ENCODE measurements at regions of chr12 and their contacts with region 1.

Region 1: GRCh38 chr12:120649442-120650232 is 9.2 kb downstream of the CABP1 start:
- DNase-seq: no peak
- H3K4me3 ChIP-seq: peak overlapping the region; percentile 40
- CTCF ChIP-seq: no peak

Region 2: GRCh38 chr12:120481022-120481767 is 168.4 kb before region 1 on chr12:
- CTCF ChIA-PET with region 1: no interaction called
- POLR2A ChIA-PET with region 1: no interaction called
- DNase-seq: no peak
- H3K4me3 ChIP-seq: no peak overlapping the region
- CTCF ChIP-seq: no peak

Region 3: GRCh38 chr12:120588948-120589930 is 60.4 kb before region 1 on chr12:
- CTCF ChIA-PET with region 1: interaction called, 101 read pairs
- POLR2A ChIA-PET with region 1: no interaction called
- DNase-seq: no peak
- H3K4me3 ChIP-seq: no peak overlapping the region
- CTCF ChIP-seq: no peak

Region 4: DNA sequence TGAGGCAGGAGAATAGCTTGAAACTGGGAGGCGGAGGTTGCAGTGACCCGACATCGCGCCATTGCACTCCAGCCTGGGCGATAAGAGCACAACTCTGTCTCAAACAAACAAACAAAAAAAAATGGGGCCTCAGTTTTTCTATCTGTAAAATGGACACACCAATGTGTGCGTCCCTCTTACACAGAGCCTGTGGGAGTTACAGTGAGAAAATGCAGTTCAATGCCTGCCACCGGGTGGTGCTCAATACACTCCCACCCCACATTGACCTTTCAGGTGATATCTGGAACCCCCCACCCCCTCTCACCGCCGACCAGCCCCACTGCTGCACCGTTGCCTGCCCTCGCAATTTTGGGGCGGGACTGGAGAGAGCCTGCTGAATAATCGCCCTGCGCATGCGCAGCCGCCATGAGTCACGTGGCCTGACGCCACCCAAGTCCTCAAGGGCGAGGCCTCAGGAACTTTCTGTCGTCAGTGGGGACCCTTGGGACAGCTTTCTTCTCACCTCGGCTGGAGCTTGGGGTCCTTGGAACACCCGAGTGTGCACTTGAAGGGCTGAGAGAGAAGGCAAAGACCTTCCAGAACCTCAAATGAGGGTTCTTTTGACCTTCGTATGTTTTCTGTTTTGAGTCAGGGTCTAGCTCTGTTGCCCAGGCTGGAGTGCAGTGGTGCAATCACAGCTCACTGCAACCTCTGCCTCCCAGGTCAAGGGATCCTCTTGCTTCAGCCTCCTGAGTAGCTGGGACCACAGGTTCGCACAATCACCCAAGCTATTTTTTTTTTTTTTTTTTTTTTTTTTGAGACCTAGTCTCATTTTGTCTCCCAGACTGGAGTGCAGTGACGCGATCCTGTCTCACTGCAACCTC is 23.8 kb before region 1 on chr12:
- CTCF ChIA-PET with region 1: interaction called, 82 read pairs
- POLR2A ChIA-PET with region 1: no interaction called
- DNase-seq: no peak
- H3K4me3 ChIP-seq: no peak overlapping the region
- CTCF ChIP-seq: no peak

Region 5: GRCh38 chr12:120669055-120669840 is 19.6 kb after region 1 on chr12:
- CTCF ChIA-PET with region 1: interaction called, 170 read pairs
- POLR2A ChIA-PET with region 1: no interaction called
- DNase-seq: no peak
- H3K4me3 ChIP-seq: no peak overlapping the region
- CTCF ChIP-seq: no peak

Region 6: GRCh38 chr12:120698665-120699064 is 49.0 kb after region 1 on chr12:
- CTCF ChIA-PET with region 1: interaction called, 26 read pairs
- POLR2A ChIA-PET with region 1: no interaction called
- DNase-seq: no peak
- H3K4me3 ChIP-seq: no peak overlapping the region
- CTCF ChIP-seq: no peak

Region 7: DNA sequence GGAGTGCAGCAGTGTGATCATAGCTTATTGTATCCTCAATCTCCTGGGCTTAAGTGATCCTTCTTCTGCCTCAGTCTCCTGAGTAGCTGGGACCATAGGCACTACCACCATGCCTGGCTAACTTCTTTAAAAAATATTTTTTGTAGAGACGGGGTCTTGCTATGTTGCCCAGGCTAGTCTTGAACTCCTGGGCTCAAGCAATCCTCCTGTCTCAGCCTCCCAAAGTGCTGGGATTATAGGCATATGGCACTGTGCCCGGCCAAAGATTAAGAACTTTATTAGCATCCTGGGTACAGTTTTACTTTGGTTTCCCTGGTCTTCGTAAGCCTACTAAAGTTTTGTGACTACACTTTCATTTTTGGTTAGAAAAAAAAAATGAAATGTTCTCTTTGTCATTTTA is 160.4 kb after region 1 on chr12:
- CTCF ChIA-PET with region 1: no interaction called
- POLR2A ChIA-PET with region 1: no interaction called
- DNase-seq: no peak
- H3K4me3 ChIP-seq: no peak overlapping the region
- CTCF ChIP-seq: no peak

Region 8: GRCh38 chr12:120971299-120972179 is 321.9 kb after region 1 on chr12:
- CTCF ChIA-PET with region 1: interaction called, 139 read pairs
- POLR2A ChIA-PET with region 1: no interaction called
- DNase-seq: peak; percentile 9
- H3K4me3 ChIP-seq: no peak overlapping the region
- CTCF ChIP-seq: peak; percentile 61

Region 9: DNA sequence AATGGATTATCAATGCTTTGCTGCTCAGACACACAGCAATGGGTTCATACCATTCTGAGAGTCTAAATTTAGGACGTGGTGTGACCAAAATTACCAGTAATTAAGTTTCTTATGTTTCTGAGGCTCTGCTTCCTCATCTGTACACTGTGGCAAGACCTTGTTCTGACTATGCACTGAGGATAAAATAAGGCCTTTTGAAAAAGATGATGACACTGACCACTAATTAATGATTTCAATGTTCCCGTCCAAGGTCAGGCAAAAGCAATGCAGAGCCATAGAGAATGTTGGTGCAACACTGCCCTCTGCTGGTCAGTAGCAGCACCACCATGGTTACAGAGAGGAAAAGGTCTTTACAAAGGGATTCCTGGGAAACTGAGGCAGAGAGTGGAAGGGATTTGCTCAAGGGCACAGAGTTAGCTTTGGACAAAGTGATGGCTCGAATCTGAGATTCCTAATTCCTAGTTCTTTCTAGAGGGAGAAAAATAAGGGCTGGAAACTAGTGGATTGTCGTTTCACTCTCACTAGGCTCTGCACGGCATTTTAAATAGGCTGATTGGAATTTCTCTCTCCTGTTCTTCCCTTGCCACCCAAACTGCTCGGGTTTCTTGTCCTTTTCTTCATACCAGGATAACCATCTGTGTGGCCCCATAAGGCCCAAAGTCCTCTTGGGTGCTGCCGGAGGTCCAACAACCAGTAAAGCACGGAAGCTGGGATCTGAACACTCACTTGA is 460.7 kb after region 1 on chr12:
- CTCF ChIA-PET with region 1: interaction called, 10 read pairs
- POLR2A ChIA-PET with region 1: no interaction called
- DNase-seq: no peak
- H3K4me3 ChIP-seq: no peak overlapping the region
- CTCF ChIP-seq: peak; percentile 85

Region 10: DNA sequence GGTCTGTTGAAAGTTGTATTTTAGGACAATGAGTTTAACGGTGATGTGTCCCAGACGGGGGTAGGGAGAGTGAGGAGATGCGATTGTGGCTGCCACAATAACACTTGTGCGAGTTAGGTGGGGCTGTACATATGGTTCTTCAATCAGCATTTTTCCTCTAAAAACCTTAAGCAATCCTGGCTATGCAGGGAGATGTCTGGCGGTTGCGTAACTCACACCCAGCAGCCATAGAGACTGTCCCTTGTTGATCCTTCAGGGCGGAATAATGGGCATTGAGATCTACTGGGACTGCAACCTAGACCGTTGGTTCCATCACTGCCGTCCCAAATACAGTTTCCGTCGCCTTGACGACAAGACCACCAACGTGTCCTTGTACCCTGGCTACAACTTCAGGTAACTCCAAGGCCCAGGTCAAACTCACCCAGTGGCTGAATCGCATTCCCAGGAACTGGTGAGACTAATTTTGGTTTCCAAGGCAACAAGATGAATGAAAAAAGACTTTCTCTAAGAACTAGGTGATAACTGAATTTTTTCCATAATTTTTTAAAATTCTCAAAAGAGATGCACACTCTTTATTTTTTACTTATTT is 517.7 kb after region 1 on chr12:
- CTCF ChIA-PET with region 1: no interaction called
- POLR2A ChIA-PET with region 1: no interaction called
- DNase-seq: no peak
- H3K4me3 ChIP-seq: no peak overlapping the region
- CTCF ChIP-seq: no peak

Measured in AG04449 (cell line).